ENCODE measurements at regions of chr5 and their contacts with region 1.

Region 1: DNA sequence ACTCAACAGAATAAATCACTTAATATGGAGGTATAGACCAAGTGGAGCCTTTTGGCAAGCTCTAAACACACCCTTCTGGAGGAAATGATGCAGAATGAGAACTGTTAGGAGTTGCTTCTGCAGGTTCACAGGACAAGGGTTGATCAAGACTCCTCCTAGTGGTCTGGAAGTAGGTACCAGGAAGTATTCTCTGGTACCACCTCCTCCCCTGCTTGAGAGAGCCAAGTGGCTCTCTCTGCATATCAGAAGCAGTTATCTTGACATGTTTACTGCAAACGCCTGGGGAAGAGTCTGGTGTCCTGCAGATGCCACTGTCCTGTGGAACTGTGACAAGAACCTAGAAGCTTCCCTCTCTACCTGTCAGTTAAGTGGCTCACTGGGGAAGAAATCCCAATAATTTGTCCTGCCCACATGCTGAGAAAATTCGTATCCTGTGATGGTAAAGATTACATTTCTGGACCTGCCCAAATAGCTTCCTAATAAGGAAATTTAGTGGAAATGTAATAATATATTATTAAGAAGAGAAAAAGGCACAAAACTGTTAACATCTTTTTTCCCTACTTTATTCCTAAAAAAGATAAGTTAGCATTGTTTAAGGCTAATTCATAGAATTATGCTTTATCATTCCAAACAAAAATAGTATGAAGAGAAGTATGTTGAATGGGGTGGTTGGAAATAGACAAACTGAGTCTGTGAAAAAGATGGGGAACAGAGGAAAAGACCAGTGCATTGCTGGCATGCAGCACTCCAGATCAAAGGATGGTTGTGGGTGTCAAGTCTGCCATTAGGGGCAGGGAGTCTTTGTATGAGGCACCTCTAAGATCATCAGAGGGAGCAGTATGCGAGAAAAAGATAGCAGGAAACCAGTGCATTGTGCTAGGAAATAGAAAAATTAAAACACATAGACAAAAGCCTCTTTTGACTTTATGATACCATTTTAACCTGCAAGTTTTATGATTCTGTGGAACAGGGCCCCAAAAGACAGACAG is 118.8 kb downstream of the CDC42SE2 start:
- DNase-seq: peak; percentile 61
- H3K4me3 Mint-ChIP-seq: peak overlapping the region; percentile 57
- H3K27ac Mint-ChIP-seq: peak overlapping the region; percentile 96
- H3K4me1 Mint-ChIP-seq: peaks cover 93% of the 10 kb centered on the region
- H3K27me3 Mint-ChIP-seq: no peaks in the 10 kb centered on the region

Region 2: DNA sequence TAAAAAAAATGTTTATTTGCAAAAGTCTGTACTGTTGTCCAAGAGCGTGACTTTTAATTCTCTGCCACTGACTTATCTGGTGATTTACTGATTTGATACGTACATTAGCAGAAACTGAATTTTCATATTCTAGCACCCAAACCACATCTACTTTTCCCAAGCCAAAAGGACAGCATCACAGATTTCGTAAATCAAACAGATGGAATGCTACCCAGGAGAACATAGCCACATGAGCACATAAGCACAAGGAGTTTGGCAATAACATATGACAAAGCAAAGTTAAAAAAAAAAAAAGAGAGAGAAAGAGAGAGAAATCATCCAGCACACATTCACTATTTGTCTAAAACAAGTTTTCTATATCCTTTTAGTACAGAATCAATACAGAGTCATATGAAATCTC is 301.3 kb before region 1 on chr5:
- CTCF ChIA-PET with region 1: no interaction called
- intact Hi-C with region 1: no loop called
- DNase-seq: no peak
- H3K4me3 Mint-ChIP-seq: no peak overlapping the region
- H3K27ac Mint-ChIP-seq: no peak overlapping the region
- H3K4me1 Mint-ChIP-seq: peaks cover 18% of the 10 kb centered on the region
- H3K27me3 Mint-ChIP-seq: no peaks in the 10 kb centered on the region

Region 3: GRCh38 chr5:131165119-131165727 is 217.5 kb before region 1 on chr5 and contains the start of gene HINT1:
- CTCF ChIA-PET with region 1: interaction called, 6 read pairs
- intact Hi-C with region 1: loop called (anchors 1 kb)
- DNase-seq: peak; percentile 93
- H3K4me3 Mint-ChIP-seq: peak within 1 kb of the TSS; percentile 96
- H3K27ac Mint-ChIP-seq: peak within 1 kb of the TSS; percentile 99
- H3K4me1 Mint-ChIP-seq: peaks cover 44% of the 10 kb centered on the region
- H3K27me3 Mint-ChIP-seq: no peaks in the 10 kb centered on the region
- total RNA-seq, gene HINT1: 372 to 379 TPM

Region 4: DNA sequence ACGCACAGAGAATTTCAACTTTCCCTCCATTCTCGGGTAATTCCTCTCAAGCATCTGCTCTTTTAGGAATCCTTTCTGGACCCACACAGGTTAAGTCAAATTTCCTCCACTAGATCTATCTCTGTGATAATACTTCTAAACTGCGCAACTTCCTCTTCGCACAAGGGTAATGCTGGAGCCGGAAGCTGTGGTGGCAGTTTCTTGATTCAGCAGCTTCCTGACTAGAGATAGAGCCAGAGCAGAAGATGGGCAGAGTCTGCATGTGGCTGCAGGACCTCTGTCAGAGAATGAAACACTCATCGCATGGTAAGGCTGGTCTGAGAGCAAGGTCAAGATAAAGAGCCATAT is 129.9 kb before region 1 on chr5:
- CTCF ChIA-PET with region 1: interaction called, 5 read pairs
- intact Hi-C with region 1: loop called (anchors 1 kb)
- DNase-seq: peak; percentile 88
- H3K4me3 Mint-ChIP-seq: peak overlapping the region; percentile 94
- H3K27ac Mint-ChIP-seq: peak overlapping the region; percentile 95
- H3K4me1 Mint-ChIP-seq: peaks cover 72% of the 10 kb centered on the region
- H3K27me3 Mint-ChIP-seq: no peaks in the 10 kb centered on the region

Region 5: GRCh38 chr5:131281133-131281867 is 101.4 kb before region 1 on chr5:
- CTCF ChIA-PET with region 1: interaction called, 11 read pairs
- intact Hi-C with region 1: loop called (anchors 1 kb)
- DNase-seq: no peak
- H3K4me3 Mint-ChIP-seq: peak overlapping the region; percentile 66
- H3K27ac Mint-ChIP-seq: peak overlapping the region; percentile 93
- H3K4me1 Mint-ChIP-seq: peaks cover 92% of the 10 kb centered on the region
- H3K27me3 Mint-ChIP-seq: no peaks in the 10 kb centered on the region

Region 6: DNA sequence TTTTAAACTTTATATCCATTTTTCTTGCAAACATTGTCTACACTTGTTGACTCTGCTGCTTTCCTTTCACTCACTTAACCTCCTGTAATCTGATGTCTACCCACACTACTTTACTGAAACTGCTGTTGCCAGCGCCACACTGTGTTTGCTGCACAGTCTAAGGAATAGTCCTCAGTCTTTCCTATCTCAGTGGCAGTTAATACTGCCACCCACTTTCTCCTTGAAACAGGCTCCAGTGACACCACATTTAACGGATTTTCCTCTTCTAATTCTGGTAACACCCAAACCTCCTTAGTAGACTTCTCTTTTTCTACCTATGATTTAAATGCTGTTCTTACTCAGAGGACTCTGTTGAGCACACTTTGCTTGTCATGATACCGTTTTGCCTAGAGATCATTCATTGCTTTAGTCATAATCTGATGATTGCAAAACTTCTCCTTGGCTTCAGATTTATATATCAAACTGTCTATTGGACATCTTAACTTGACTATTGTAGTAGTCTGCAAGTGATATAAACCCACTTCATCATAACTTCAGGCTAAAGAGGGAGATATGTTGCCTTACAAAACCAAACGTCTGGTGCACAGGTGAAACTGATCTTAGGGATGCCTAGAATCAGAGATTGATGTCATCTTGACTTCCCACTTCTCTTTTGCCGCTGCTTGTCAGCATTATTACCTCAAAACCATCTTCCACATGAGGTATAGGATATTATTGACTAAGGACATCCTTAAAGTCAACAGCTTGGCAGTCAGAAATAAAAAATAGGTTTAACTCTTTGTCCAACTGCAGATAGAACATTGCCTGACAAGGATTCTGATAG is 24.8 kb before region 1 on chr5:
- CTCF ChIA-PET with region 1: interaction called, 18 read pairs
- intact Hi-C with region 1: loop called (anchors 1 kb)
- DNase-seq: peak; percentile 67
- H3K4me3 Mint-ChIP-seq: peak overlapping the region; percentile 54
- H3K27ac Mint-ChIP-seq: peak overlapping the region; percentile 91
- H3K4me1 Mint-ChIP-seq: peaks cover 67% of the 10 kb centered on the region
- H3K27me3 Mint-ChIP-seq: no peaks in the 10 kb centered on the region

Region 7: GRCh38 chr5:131505237-131505908 is 122.7 kb after region 1 on chr5:
- CTCF ChIA-PET with region 1: no interaction called
- intact Hi-C with region 1: no loop called
- DNase-seq: no peak
- H3K4me3 Mint-ChIP-seq: no peak overlapping the region
- H3K27ac Mint-ChIP-seq: no peak overlapping the region
- H3K4me1 Mint-ChIP-seq: peaks cover 11% of the 10 kb centered on the region
- H3K27me3 Mint-ChIP-seq: no peaks in the 10 kb centered on the region

Region 8: DNA sequence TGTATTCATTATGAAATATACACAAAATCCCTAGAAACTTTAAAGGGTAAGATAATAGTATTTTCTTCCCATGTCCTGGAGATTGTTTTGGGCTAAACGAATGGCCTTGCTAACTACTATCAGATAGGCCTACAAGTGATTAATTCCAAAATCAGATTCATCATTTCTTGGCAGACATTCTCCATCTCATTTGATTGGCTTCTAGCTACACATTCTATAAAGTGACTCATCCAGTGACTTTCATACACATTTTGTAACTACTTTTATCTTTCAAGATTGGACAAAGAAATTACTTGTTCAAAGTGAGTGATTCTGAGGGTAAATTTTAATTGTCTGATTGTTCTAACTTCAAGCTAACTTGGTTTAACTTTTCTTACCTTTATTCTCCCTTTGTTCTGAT is 159.1 kb after region 1 on chr5:
- CTCF ChIA-PET with region 1: no interaction called
- intact Hi-C with region 1: loop called (anchors 5 kb)
- DNase-seq: no peak
- H3K4me3 Mint-ChIP-seq: peak overlapping the region; percentile 20
- H3K27ac Mint-ChIP-seq: peak overlapping the region; percentile 78
- H3K4me1 Mint-ChIP-seq: peaks cover 81% of the 10 kb centered on the region
- H3K27me3 Mint-ChIP-seq: no peaks in the 10 kb centered on the region